A673 (cell line): ENCODE measurements at regions of chr22 and their contacts with region 1.

Region 1: GRCh38 chr22:43501878-43502277 is 90.1 kb downstream of the MPPED1 start:
- DNase-seq: no peak
- H3K4me3 ChIP-seq: no peak overlapping the region
- H3K27ac ChIP-seq: no peak overlapping the region
- H3K4me1 ChIP-seq: no peaks in the 10 kb centered on the region
- H3K27me3 ChIP-seq: no peaks in the 10 kb centered on the region
- CTCF ChIP-seq: no peak

Region 2: GRCh38 chr22:43550024-43550620 is 48.2 kb after region 1 on chr22:
- CTCF ChIA-PET with region 1: no interaction called
- POLR2A ChIA-PET with region 1: interaction called, 15 read pairs
- intact Hi-C with region 1: no loop called
- DNase-seq: no peak
- H3K4me3 ChIP-seq: no peak overlapping the region
- H3K27ac ChIP-seq: no peak overlapping the region
- H3K4me1 ChIP-seq: peaks cover 10% of the 10 kb centered on the region
- H3K27me3 ChIP-seq: no peaks in the 10 kb centered on the region
- CTCF ChIP-seq: no peak

Region 3: GRCh38 chr22:43654271-43654670 is 152.4 kb after region 1 on chr22:
- CTCF ChIA-PET with region 1: no interaction called
- POLR2A ChIA-PET with region 1: no interaction called
- intact Hi-C with region 1: no loop called
- DNase-seq: no peak
- H3K4me3 ChIP-seq: no peak overlapping the region
- H3K27ac ChIP-seq: no peak overlapping the region
- H3K4me1 ChIP-seq: no peaks in the 10 kb centered on the region
- H3K27me3 ChIP-seq: no peaks in the 10 kb centered on the region
- CTCF ChIP-seq: no peak

Region 4: DNA sequence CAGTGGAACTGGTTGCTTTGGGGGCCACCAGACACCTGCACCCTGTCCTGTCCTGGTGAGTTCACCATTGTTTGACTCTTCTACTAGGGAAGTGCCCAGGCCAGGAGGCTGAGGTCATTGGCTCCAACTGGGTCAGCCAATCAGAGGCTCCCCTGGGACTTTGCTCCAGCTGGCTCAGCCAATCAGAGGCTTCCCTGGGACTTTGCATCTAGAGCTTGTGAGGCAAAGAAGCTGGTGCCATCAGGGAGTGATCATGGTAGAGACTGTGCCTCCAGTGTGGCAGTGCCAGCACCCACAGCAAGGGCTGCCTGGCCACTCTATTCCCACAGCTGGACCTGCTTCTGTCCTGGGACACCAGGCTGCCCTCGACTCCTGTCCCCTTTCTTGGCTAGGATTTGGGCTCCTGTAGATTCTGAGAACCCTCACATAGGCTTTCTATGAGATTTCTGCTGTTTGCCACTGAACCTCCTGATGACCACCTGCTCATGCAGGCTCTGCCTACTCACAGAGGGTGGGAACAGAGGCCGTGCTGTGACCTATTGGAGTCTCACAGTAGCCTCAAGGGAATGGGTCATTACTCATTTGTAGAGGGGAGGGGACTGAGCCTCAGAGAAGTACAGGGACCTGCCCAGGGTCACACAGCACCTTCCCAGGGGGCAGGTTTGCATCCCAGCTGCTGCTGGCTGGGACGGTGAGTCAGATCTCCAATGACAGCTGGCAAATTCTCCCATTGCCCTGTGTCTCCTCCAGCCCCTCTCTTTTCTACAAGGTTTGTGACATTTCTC is 870.1 kb after region 1 on chr22:
- CTCF ChIA-PET with region 1: no interaction called
- POLR2A ChIA-PET with region 1: interaction called, 19 read pairs
- intact Hi-C with region 1: no loop called
- DNase-seq: no peak
- H3K4me3 ChIP-seq: no peak overlapping the region
- H3K27ac ChIP-seq: no peak overlapping the region
- H3K4me1 ChIP-seq: no peaks in the 10 kb centered on the region
- H3K27me3 ChIP-seq: peaks cover 5% of the 10 kb centered on the region
- CTCF ChIP-seq: no peak